ENCODE measurements at regions of chr11 and their contacts with region 1.

Region 1: GRCh38 chr11:61639816-61640443 is 40.3 kb upstream of the DAGLA start:
- DNase-seq: peak; percentile 72
- ATAC-seq: peak; percentile 16; the same call in 1 of the 2 replicates
- H3K4me3 ChIP-seq: no peak overlapping the region
- H3K27ac ChIP-seq: no peak overlapping the region
- H3K4me1 ChIP-seq: peaks cover 18% of the 10 kb centered on the region
- H3K27me3 ChIP-seq: no peaks in the 10 kb centered on the region
- CTCF ChIP-seq: no peak

Region 2: DNA sequence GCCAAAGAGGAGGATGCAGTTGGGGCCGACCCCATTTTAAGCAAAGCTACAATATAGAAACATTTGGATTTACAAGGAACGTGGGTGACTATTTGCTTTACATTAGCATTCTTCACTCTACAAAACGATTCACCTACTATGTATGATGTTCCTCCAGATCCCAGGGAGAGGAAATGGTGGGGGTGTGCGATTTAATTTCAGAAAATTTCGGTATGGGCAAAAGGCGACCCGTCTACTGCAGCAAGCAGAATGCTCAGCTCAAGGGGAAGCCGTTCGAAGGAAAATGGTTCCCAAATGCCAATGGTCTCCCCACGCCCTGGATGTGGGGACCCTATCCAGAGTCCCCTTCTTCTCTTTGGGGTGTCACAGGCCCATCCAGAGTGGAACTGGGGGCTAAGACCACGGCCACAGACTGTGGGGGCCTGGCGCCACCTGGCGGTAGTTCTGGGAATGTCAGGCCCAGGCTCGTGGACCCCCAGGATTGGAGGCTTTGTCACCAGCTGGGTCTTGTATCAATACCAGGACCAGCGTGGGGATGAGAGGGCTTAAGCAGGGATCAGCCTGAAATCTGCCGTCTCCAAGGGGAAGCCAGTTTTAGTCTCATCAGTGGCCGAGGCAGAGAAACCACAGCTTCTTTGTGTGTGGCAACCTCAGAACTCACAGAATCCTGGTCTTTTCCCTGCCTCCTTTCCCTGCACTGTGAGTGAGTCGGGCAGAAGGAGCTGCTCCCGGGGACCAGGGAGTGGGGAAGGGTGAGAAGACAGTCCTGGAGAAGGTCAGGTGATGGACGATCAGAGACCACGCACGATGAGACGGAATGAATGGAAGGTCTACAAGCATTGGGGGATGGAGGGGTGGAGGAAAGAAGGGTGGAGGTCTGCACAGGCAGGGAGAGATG is 123.0 kb before region 1 on chr11:
- CTCF ChIA-PET with region 1: interaction called, 10 read pairs
- POLR2A ChIA-PET with region 1: interaction called, 5 read pairs
- intact Hi-C with region 1: no loop called
- DNase-seq: peak; percentile 43
- ATAC-seq: peak; percentile 28; the same call in 1 of the 2 replicates
- H3K4me3 ChIP-seq: no peak overlapping the region
- H3K27ac ChIP-seq: no peak overlapping the region
- H3K4me1 ChIP-seq: peaks cover 11% of the 10 kb centered on the region
- H3K27me3 ChIP-seq: no peaks in the 10 kb centered on the region
- CTCF ChIP-seq: peak; percentile 99

Region 3: DNA sequence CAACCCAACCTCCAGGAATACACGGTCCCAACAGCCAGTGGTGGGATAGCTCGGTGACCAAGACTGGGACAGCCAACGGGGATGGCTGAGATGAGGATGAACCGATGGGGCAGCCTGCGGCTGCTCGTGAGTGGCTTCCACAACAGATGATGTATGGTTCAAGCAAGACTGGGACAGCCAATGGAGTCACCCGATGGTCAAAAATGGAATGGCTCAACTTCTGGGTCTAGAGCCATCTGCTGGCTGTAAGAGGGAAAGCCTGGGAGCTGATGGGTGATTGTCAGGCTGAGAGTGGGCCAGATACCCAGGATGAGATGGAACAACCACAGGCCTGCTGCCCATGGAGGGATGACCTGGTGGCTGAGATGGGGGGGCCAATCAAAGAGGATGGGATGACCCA is 94.6 kb before region 1 on chr11:
- CTCF ChIA-PET with region 1: no interaction called
- POLR2A ChIA-PET with region 1: no interaction called
- intact Hi-C with region 1: no loop called
- DNase-seq: peak; percentile 33
- ATAC-seq: no peak
- H3K4me3 ChIP-seq: no peak overlapping the region
- H3K27ac ChIP-seq: no peak overlapping the region
- H3K4me1 ChIP-seq: peaks cover 41% of the 10 kb centered on the region
- H3K27me3 ChIP-seq: no peaks in the 10 kb centered on the region
- CTCF ChIP-seq: peak; percentile 82

Region 4: DNA sequence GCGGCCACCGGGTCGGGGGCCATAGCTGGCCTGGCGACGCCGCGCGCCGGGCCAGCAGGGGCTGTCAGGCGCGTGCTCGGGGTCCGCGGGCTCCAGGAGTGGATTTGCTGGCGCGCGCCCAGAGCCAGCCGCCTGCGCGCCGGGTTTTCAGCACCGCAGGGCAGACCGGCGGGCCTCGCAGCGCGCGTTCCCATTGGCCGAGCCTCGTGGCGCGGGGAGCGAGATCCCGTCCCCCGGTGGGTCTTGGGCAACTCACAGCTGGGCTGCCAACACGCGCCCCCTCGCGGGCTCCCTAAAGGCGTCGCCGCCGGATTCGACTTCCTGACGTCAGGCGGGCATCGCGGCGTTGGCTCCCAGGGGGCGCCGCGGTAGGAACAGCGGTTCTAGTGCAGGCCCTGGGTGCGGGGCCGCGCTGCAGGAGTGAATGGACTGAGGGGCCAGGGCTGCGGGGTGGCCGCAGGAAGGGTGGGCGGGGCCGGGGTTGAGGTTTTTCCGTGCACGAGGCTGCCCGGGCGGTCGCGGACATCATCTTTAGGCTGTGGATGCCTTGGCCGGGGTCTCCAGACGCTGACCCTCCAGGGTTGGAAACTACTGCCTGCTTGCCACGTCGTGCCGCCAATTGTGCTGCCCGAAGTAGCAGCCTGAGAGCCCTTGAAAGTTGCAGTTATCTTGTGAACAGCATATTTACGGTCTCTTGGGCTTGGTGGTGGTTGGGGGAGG is 177.0 kb after region 1 on chr11 and contains the start of gene FADS1:
- CTCF ChIA-PET with region 1: no interaction called
- POLR2A ChIA-PET with region 1: no interaction called
- intact Hi-C with region 1: no loop called
- DNase-seq: peak; percentile 97
- ATAC-seq: peak; percentile 44
- H3K4me3 ChIP-seq: peak within 1 kb of the TSS; percentile 78
- H3K27ac ChIP-seq: peak within 1 kb of the TSS; percentile 86
- H3K4me1 ChIP-seq: peaks cover 46% of the 10 kb centered on the region
- H3K27me3 ChIP-seq: no peaks in the 10 kb centered on the region
- CTCF ChIP-seq: peak; percentile 69
- total RNA-seq, gene FADS1: 79.4 and 84.4 TPM in 2 replicates

Measured in PC-3 (cell line).